ENCODE measurements at regions of chr17 and their contacts with region 1.

Region 1: DNA sequence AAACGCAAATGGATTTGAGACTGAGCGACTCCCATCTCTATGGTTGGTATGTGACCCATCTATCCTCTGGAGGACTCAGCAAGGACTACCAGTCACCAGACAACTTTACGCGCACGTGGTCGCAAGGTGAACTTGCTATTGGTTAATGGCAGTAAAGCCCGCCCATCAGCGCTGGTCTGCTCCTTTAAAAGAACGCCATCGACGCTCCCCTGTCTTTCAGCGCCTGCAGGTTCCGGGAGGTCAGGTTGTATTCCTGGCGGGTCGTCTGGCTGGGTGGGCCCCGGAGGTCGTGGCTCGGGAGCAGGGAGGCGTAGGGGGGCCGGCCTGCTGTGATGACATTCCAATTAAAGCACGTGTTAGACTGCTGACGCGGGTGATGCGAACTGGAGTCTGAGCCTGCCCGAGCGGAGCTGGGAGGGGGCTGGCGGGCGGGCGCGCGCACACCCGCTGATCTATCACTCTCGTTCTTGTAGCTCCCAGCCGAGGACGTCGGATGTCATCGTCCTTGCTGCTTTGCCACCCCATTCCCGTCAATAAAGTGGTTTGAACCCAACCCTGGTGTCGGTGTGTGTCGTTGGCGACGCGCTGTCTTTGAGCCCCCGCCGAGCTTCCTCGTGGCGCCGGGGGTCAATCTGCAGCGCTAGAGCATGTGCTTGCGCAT is 15.9 kb upstream of the ERN1 start:
- DNase-seq: peak; percentile 93
- H3K4me3 Mint-ChIP-seq: no peak overlapping the region
- H3K27ac Mint-ChIP-seq: no peak overlapping the region
- H3K4me1 Mint-ChIP-seq: peaks cover 19% of the 10 kb centered on the region
- H3K27me3 Mint-ChIP-seq: peaks cover 2% of the 10 kb centered on the region

Region 2: DNA sequence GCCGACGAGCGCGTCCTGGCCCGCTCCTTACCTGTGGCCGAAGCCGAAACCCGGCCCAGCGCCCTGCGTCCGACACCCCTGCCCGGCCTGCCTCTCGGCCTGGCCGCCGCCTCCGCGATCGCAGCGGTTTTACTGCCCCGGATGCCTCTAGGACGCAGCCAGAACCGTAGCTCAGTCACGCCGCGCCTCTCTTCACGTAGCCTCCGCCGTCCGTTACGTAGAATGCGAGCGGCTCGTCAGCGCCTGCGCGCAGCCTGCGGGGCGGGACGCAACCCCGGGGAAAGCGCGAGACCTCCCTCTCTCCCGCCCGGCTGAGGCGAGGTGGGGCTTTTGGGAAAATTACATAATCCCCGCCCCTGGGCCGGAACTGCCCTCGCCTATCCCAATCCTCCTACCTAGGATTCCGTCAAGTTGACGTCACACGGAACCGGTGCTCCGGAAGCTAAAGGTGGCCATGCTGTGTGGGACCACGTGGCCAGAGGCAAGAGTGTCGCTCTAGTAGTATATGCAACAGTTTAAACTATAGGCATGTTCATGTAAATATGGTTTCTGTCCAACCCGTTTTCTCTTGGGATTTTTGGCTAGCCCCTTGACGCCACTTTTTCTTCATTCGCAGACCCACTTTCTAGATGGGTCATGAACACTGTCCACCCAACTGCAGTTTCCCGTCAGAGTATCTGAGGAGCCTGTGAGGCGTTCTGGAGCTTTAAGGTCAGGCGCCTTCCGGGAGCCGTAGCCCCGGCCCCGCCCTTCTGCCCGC is 372.3 kb before region 1 on chr17 and contains the start of gene CCDC47:
- intact Hi-C with region 1: loop called (anchors 5 kb)
- DNase-seq: peak; percentile 99
- H3K4me3 Mint-ChIP-seq: peak within 1 kb of the TSS; percentile 96
- H3K27ac Mint-ChIP-seq: peak within 1 kb of the TSS; percentile 100
- H3K4me1 Mint-ChIP-seq: peaks cover 63% of the 10 kb centered on the region
- H3K27me3 Mint-ChIP-seq: no peaks in the 10 kb centered on the region
- total RNA-seq, gene CCDC47: 74.8 and 79.2 TPM in 2 replicates

Region 3: DNA sequence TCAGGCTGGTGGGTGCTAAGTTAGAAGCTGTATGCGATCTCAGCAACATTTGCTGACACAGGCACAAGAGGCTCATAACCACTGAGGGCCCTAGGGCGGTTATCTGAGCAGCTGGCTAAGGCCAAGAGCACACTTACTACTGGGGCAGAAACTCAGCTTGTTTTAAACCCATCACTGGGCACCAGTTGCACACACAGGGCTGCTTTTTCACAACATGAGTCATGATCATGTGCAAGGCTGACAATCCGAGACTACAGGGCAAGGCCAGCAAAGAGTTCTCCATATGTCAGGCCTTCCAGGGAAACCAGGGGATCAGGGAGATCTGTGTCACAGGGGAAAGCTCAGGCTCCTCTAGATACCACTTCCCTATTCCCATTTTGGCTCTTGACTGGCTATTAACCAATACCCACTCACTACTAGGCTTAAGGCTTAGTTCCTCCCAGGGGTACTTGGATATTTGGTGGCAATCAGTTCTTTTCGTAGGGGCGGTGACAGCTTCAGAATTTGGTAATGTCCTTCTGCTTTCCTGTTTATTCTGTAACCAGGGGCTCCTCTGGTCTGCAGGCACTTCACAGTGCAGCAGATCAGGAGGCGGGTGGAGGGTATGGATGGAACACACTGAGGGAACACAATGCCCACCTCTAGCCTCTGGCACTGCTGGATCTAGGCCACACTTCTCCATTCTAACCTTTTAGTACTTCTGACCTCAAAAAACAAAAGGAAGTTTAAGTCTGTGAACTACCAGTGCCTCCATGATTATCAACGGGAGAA is 29.0 kb after region 1 on chr17:
- intact Hi-C with region 1: no loop called
- DNase-seq: no peak
- H3K4me3 Mint-ChIP-seq: no peak overlapping the region
- H3K27ac Mint-ChIP-seq: no peak overlapping the region
- H3K4me1 Mint-ChIP-seq: no peaks in the 10 kb centered on the region
- H3K27me3 Mint-ChIP-seq: no peaks in the 10 kb centered on the region

Region 4: GRCh38 chr17:64200080-64201032 is 54.5 kb after region 1 on chr17:
- intact Hi-C with region 1: loop called (anchors 2 kb)
- DNase-seq: no peak
- H3K4me3 Mint-ChIP-seq: no peak overlapping the region
- H3K27ac Mint-ChIP-seq: peak overlapping the region; percentile 27
- H3K4me1 Mint-ChIP-seq: peaks cover 39% of the 10 kb centered on the region
- H3K27me3 Mint-ChIP-seq: no peaks in the 10 kb centered on the region

Region 5: GRCh38 chr17:64216338-64217248 is 70.7 kb after region 1 on chr17:
- intact Hi-C with region 1: loop called (anchors 5 kb)
- DNase-seq: no peak
- H3K4me3 Mint-ChIP-seq: no peak overlapping the region
- H3K27ac Mint-ChIP-seq: no peak overlapping the region
- H3K4me1 Mint-ChIP-seq: peaks cover 16% of the 10 kb centered on the region
- H3K27me3 Mint-ChIP-seq: peaks cover 2% of the 10 kb centered on the region

Region 6: GRCh38 chr17:64281962-64282727 is 136.3 kb after region 1 on chr17:
- intact Hi-C with region 1: loop called (anchors 1 kb)
- DNase-seq: peak; percentile 28
- H3K4me3 Mint-ChIP-seq: no peak overlapping the region
- H3K27ac Mint-ChIP-seq: no peak overlapping the region
- H3K4me1 Mint-ChIP-seq: peaks cover 7% of the 10 kb centered on the region
- H3K27me3 Mint-ChIP-seq: no peaks in the 10 kb centered on the region

Measured in activated T-helper 1 cell treated with anti-CD3 and anti-CD28 coated beads, Interleukin-12 subunit alpha, Interleukin-12 subunit beta, Interleukin-2, Interleukin-4 antibody, amounts not matched to agents 30 ng/mL and 10 ng/mL and 1 ng/mL, durations not matched to agents 14 hours and 24 hours and 36 hours (primary cell).